Endothelial cell of umbilical vein (primary cell): ENCODE measurements at regions of chr3 and their contacts with region 1.

Region 1: DNA sequence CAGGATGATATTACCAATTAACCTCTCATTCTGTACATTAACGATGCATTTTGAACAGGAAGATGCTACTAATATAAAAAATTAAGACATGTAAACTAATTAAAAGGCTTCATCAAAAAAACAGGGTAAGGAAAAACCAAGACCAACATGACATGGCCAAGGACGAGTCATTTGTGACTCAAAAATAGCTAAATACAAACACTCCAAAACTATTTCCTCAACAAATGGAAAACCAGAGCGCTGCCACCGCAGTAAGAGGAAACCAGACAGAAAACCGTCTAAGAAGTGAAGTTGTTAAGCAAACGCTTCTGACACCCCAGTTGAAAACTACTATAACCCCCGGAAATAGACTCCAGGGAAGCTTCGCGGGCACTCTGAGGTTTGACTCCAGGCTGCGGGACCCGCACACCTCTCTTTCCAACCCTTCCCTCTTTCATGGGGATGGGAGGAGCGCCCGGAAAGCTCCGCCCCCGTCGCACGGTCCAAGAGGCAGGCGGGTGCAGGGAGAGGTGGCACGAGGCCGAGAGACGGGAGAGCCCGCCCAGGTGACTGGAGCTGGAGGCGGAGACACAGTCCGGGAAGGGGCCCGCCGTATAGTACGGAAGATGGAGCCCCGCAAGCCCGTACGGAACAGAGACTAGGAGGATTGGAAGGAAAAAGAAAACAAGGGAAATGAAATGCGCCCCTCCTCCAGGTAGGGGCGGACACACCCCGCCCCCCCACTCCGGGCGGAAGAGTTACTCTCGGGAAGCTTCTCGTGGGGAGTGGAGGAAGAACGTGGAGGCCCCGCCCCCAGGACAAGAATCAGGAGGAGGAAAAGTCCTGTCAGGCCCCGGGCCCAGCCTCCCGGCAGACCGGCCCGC is 708 bp downstream of the DCAF1 start:
- DNase-seq: peak; percentile 96
- H3K4me3 ChIP-seq: peak overlapping the region; percentile 66 to 97 (median 94)
- H3K27ac ChIP-seq: peak overlapping the region; percentile 63
- H3K4me1 ChIP-seq: peaks cover 8% of the 10 kb centered on the region
- H3K27me3 ChIP-seq: no peaks in the 10 kb centered on the region
- CTCF ChIP-seq: no peak
- POLR2A ChIP-seq: peak; percentile 4

Region 2: DNA sequence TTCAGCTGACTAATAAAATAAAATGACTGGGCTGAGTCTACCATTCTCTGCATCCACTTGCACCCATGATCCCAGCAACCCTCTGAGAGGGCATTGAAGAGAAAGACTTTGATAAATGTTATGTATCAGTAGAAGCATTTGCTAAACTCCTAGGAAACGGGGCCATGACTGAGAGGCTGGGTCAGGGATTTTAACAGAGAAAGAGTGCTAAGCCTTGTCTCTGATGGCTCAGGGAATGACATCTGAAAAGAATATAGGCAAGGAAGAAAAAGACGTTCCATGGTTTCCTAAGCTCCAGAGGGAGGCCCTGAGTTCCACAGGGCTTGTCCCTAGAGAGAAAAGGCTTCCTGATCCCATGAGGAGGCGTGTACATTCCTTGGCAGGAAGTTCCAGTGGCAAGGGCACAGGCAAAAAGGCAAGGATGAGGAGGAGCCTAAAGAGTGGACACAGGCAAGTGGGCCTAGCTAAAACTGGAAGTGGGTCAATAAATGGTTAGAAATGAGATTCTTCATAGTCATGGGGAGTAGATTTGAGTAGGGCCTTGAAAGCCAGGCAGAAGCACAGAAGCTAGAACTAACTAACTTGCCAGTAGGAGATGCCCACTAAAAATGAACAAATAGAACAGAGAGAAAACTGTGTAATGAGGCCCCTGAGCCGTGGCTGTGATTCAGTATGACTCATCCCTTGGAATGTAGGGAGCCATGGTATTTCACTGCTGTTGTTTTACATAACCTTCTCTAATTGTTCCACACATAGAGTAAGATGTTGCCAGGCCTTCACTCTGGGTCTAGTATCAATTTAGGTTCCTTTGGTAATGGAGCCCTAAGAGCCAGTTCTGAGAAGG is 158.9 kb before region 1 on chr3:
- CTCF ChIA-PET with region 1: no interaction called
- POLR2A ChIA-PET with region 1: no interaction called
- dilution Hi-C with region 1: no loop called
- intact Hi-C with region 1: loop called (anchors 1 kb)
- DNase-seq: peak; percentile 89
- H3K4me3 ChIP-seq: no peak overlapping the region
- H3K27ac ChIP-seq: peak overlapping the region; percentile 84
- H3K4me1 ChIP-seq: peaks cover 15% of the 10 kb centered on the region
- H3K27me3 ChIP-seq: peaks cover under 1 to 3% of the 10 kb centered on the region in 2 experiments
- CTCF ChIP-seq: no peak
- POLR2A ChIP-seq: no peak

Region 3: GRCh38 chr3:51477360-51477711 is 21.8 kb before region 1 on chr3:
- CTCF ChIA-PET with region 1: no interaction called
- POLR2A ChIA-PET with region 1: interaction called, 11 read pairs
- dilution Hi-C with region 1: no loop called
- intact Hi-C with region 1: no loop called
- DNase-seq: no peak
- H3K4me3 ChIP-seq: no peak overlapping the region
- H3K27ac ChIP-seq: no peak overlapping the region
- H3K4me1 ChIP-seq: no peaks in the 10 kb centered on the region
- H3K27me3 ChIP-seq: no peaks in the 10 kb centered on the region
- CTCF ChIP-seq: no peak
- POLR2A ChIP-seq: no peak

Region 4: GRCh38 chr3:51538459-51539290 is 39.6 kb after region 1 on chr3 and contains the start of gene RAD54L2:
- CTCF ChIA-PET with region 1: interaction called, 18 read pairs
- POLR2A ChIA-PET with region 1: interaction called, 6 read pairs
- dilution Hi-C with region 1: no loop called
- intact Hi-C with region 1: loop called (anchors 2 kb)
- DNase-seq: peak; percentile 86
- H3K4me3 ChIP-seq: peak within 1 kb of the TSS; percentile 81 to 91 (median 83)
- H3K27ac ChIP-seq: peak within 1 kb of the TSS; percentile 54
- H3K4me1 ChIP-seq: peaks cover 15% of the 10 kb centered on the region
- H3K27me3 ChIP-seq: no peaks in the 10 kb centered on the region
- CTCF ChIP-seq: peak in 1 of 2 donors; percentile 21
- POLR2A ChIP-seq: peak; percentile 75
- total RNA-seq, gene RAD54L2: 31.1 and 32.5 TPM in 2 replicates

Region 5: GRCh38 chr3:51670823-51671733 is 172.0 kb after region 1 on chr3 and contains the start of gene TEX264:
- CTCF ChIA-PET with region 1: interaction called, 230 read pairs
- POLR2A ChIA-PET with region 1: interaction called, 9 read pairs
- dilution Hi-C with region 1: no loop called
- intact Hi-C with region 1: loop called (anchors 1 kb)
- DNase-seq: peak; percentile 69
- H3K4me3 ChIP-seq: peak within 1 kb of the TSS; percentile 72 to 88 (median 82)
- H3K27ac ChIP-seq: peak within 1 kb of the TSS; percentile 55
- H3K4me1 ChIP-seq: peaks cover 12% of the 10 kb centered on the region
- H3K27me3 ChIP-seq: no peaks in the 10 kb centered on the region
- CTCF ChIP-seq: no peak
- POLR2A ChIP-seq: peak; percentile 88
- total RNA-seq, gene TEX264: 26.3 and 29.0 TPM in 2 replicates

Region 6: DNA sequence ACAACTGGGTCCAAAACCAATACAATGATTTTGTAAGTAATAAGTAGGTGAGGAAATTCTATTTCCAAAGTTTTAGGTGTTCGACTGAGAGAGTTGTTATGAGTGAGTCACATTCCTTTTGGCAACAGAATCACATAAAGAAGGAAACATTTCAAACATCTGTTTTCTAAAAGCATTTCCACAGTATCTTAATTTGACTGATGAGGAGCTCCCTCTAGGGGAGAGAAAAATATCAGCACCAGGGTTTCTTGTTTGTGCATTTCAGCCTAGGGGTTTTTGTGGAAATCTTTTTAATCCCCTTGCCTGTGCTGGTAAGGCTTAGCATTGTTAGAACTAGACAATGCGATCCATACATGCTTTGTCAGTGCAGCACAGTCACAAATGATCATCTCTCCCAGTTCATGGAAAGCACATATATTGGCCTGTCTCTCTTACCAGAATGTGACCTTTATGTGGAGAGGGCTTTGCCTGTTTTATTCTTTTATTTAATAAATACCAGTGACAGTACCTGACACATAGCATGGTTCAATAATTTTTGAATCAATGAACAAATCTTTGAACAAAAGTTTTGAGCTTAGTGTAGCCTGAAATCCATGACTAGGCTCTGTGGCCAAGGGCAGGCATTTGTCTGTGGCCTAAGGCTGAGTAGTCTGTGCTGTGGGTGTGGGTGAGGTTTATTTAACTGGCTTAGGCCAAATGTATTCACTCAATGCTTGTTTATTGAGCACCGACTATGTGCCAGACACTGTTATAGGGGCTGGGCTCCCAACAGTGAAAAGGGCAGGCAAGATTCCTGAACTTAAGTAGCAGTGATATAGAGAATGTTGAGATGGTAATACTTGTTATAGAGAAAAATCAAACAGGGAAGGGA is 301.0 kb after region 1 on chr3:
- CTCF ChIA-PET with region 1: interaction called, 57 read pairs
- POLR2A ChIA-PET with region 1: no interaction called
- dilution Hi-C with region 1: no loop called
- intact Hi-C with region 1: loop called (anchors 1 kb)
- DNase-seq: peak; percentile 74
- H3K4me3 ChIP-seq: no peak overlapping the region
- H3K27ac ChIP-seq: no peak overlapping the region
- H3K4me1 ChIP-seq: no peaks in the 10 kb centered on the region
- H3K27me3 ChIP-seq: peaks cover 20 to 29% of the 10 kb centered on the region in 2 experiments
- CTCF ChIP-seq: peak; percentile 64 to 65
- POLR2A ChIP-seq: no peak